ENCODE measurements at regions of chr22 and their contacts with region 1.

Region 1: GRCh38 chr22:39306581-39307361 is 12.7 kb downstream of the RPL3 start:
- DNase-seq: peak in 1 of 2 donors; percentile 47
- ATAC-seq: peak in 6 of 8 donors; percentile 20 to 52 (median 33)
- H3K4me3 ChIP-seq: no peak overlapping the region
- H3K27ac ChIP-seq: peak overlapping the region in 3 of 10 donors; percentile 9 to 36 (median 20)
- H3K4me1 ChIP-seq: peaks cover 6 to 47% (median 31%) of the 10 kb centered on the region in 9 donors
- H3K27me3 ChIP-seq: no peaks in the 10 kb centered on the region
- CTCF ChIP-seq: peak in 7 of 9 donors; percentile 40 to 62 (median 53)

Region 2: DNA sequence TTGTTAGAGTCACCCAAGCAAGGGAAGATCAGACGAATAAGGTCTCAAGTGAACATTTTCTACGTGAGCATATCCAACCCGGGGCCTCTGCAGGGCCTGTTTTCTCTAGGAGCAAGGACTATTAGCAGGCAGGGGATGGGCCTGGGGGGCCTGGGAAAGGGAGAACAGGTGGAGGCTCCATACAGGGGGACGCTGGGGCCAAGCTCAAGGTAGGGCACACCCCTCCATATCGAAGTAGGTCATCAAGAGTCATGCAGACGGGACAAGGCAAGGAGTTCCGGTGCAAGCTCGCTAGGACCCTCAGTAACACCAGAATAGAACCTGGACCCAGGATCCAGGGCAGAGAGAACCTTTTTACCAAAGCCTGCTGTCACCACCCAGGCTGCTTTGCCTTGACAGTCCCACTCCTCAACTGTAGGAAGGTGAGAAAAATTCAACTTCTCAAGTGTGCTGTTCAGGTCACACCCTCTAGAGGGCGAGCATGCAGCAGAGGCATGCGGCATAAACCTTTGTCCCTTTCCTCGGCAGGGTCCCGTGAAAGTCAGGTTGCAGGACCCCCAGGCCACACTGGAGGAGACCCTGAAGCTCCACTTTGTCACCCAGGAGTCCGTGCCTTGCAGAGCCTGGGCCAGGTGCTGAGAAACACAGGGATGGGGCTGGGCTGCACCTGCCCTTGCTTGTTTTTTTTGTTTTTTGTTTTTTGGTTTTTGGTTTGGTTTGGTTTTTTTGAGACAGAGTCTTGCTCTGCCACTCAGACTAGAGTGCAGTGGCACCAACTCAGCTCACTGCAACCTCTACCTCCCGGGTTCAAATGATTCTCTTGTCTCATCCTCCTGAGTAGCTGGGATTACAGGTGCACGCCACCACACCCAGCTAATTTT is 333.2 kb before region 1 on chr22:
- intact Hi-C with region 1: no loop called
- DNase-seq: no peak
- ATAC-seq: peak in 6 of 8 donors; percentile 46 to 78 (median 60)
- H3K4me3 ChIP-seq: no peak overlapping the region
- H3K27ac ChIP-seq: no peak overlapping the region
- H3K4me1 ChIP-seq: peaks cover 0 to 20% (median 0%) of the 10 kb centered on the region in 9 donors
- H3K27me3 ChIP-seq: peaks cover 0 to 19% (median 4%) of the 10 kb centered on the region in 7 donors
- CTCF ChIP-seq: peak; percentile 31 to 85 (median 74)

Region 3: DNA sequence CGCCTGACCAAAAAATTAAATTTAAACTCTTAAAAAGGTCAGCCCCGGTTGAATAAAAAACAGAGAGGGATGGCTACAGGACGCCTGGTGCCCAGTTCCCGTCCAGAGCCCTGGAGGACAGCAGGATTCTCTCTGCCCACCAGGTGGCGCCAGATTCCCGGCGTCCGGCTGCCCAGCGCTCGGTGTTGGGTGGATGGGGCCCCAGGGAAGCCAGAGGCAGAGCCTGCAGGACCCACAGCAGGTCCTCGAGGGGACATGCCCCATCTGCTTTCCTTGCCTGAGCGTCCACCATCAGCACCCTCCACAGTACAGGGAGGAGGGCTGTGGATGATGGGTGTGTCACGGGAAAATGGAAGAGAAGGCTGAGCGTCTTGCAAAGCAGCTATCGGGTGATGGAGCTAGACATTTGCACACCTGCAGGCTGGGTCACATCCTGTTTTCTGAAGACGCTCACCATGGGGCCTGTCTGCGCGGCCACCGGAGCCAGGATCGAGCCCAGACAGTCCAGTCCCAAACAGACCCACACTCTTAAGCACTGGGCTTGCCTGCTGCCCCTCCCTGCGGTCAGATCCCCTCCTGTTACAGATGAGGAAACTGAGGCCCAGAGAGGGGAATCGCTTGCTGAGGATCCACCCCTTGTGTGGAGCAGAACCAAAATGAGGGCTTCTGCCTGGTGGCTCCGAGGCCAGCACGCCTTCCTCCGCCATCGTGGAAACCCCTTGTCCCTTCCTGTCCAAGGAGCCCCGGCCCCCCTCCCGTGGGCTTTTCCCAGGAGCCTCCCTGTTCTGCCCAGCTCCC is 135.7 kb before region 1 on chr22:
- intact Hi-C with region 1: loop called in 8 of 10 experiments (anchors 1 to 2 kb)
- DNase-seq: peak; percentile 83 to 89
- ATAC-seq: peak; percentile 70 to 86 (median 82)
- H3K4me3 ChIP-seq: peak overlapping the region in 3 of 10 donors; percentile 10 to 23 (median 18)
- H3K27ac ChIP-seq: peak overlapping the region in 6 of 10 donors; percentile 0 to 92 (median 27)
- H3K4me1 ChIP-seq: peaks cover 32 to 57% (median 53%) of the 10 kb centered on the region in 9 donors
- H3K27me3 ChIP-seq: no peaks in the 10 kb centered on the region
- CTCF ChIP-seq: peak; percentile 93 to 97 (median 96)

Region 4: GRCh38 chr22:39183991-39184585 is 122.7 kb before region 1 on chr22:
- intact Hi-C with region 1: no loop called
- DNase-seq: no peak
- ATAC-seq: peak in 7 of 8 donors; percentile 7 to 36 (median 24)
- H3K4me3 ChIP-seq: no peak overlapping the region
- H3K27ac ChIP-seq: peak overlapping the region in 9 of 10 donors; percentile 78 to 92 (median 82)
- H3K4me1 ChIP-seq: peaks cover 11 to 36% (median 31%) of the 10 kb centered on the region in 9 donors
- H3K27me3 ChIP-seq: no peaks in the 10 kb centered on the region
- CTCF ChIP-seq: no peak

Region 5: DNA sequence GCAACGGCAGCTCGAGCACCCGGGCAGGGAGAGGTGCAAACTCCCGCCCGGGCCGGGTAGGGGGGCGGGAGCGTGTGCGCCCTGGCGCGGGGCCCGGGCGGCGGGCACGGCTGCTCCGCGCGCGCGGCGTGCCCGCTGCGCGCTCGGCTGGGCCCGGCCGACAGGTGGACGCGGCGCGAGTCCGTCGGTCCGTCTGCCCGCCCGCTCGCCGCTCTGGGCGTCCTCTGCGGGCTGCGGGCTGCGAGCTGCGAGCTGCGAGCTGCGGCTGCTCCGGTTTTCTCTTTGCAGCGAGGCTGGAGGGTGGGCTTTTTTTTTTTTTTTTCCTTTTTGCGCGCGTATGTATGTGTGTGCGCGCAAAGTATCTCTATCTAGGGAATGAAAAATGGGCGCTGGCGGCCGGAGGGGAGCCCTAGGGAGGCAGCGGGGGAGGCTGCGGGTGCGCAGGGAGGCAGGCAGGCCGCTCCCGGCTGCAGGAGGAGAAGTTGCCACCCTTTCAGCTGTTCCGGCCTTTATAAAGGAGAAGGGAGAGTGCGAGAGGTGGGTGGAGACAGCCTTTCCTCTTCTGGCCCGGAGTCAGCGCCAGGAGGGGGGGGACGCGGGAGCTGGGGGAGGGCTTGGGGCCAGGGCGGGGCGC is 62.2 kb before region 1 on chr22 and contains the start of gene PDGFB:
- intact Hi-C with region 1: loop called in 7 of 10 experiments (anchors 5 to 10 kb)
- DNase-seq: peak; percentile 66 to 79
- ATAC-seq: peak; percentile 24 to 80 (median 66)
- H3K4me3 ChIP-seq: peak within 1 kb of the TSS; percentile 62 to 88 (median 79)
- H3K27ac ChIP-seq: peak within 1 kb of the TSS; percentile 80 to 98 (median 92)
- H3K4me1 ChIP-seq: peaks cover 10 to 69% (median 49%) of the 10 kb centered on the region in 9 donors
- H3K27me3 ChIP-seq: peaks cover 0 to 69% (median 0%) of the 10 kb centered on the region in 7 donors
- CTCF ChIP-seq: no peak
- total RNA-seq, gene PDGFB: 9.9 to 45.6 (median 18.5) TPM

Measured in heart right ventricle (tissue), 16 donors.